Tibial artery (tissue), 4 donors: ENCODE measurements at regions of chr2 and their contacts with region 1.

Region 1: DNA sequence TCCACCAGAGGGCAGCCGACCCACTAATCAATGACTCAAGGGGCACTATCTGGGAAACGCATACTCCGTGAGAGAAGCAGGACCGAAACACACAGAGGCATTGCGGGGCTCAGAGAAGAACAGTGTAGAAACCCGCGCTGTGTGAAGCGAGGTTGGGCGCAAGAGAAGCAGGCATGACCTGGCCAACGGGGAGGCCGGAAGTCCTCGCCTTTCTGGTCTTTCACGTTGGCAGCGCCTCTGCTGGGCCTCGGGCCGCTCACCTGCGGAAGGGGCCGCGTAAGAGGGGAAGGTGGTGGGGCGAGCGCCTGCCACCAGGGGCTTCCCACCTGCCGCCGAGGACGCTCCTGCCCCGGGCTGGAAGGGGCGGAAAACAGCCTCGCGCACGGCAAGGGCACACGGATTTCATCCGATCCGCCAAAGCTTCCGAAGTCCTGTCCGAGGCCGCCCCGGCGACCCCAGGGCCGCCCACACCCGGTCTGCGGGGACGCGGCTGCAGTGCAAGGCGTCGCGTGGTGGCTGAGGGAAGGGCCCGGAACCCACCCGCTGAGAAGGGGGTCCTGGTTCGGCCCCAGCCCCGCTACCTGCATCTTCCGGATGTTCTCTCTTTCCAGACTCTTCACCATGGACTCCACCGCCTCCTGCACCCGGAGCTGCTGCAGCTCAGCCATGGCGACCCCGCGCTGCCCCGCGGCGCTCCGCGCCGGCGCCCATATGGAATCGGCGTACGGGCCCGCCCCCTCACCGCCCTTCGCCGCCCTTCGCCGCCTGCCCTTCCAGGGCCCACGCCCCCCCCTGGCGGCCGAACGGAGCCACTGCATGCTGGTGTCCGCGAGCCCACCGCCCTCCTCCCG is at the start of gene FAM136A:
- DNase-seq: peak; percentile 74 to 89
- H3K4me3 ChIP-seq: peak within 1 kb of the TSS; percentile 72 to 85
- H3K27ac ChIP-seq: peak within 1 kb of the TSS; percentile 80
- H3K4me1 ChIP-seq: peaks cover 0 to 10% (median 7%) of the 10 kb centered on the region in 4 donors
- H3K27me3 ChIP-seq: no peaks in the 10 kb centered on the region
- CTCF ChIP-seq: peak; percentile 93 to 98

Region 2: DNA sequence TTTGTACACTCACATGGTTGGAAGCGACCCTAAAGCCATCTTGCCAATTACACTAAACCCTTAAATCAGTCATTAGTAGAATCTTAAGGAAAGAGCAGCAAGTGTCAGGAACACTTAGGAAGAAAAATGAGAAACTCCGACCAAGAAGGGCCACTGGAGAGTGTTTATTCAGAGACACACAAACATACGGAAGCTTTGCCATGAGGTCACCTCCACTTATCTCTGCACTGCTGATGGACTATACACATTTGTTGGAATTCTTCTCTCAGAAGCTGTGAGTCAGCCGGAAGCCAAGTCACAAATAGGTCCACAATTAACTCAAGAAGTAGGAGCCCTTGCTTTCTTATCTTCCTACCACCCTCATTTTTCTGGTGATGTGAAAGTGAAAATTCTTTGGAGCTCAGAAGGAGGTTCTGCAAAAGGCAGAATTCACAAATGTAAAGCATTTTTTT is 1452.0 kb before region 1 on chr2:
- intact Hi-C with region 1: no loop called
- DNase-seq: no peak
- H3K4me3 ChIP-seq: no peak overlapping the region
- H3K27ac ChIP-seq: no peak overlapping the region
- H3K4me1 ChIP-seq: no peaks in the 10 kb centered on the region
- H3K27me3 ChIP-seq: peaks cover 0 to 3% of the 10 kb centered on the region in 2 donors
- CTCF ChIP-seq: no peak

Region 3: GRCh38 chr2:70190418-70191243 is 110.9 kb before region 1 on chr2 and contains the start of gene C2orf42:
- intact Hi-C with region 1: no loop called
- DNase-seq: peak; percentile 96 to 98
- H3K4me3 ChIP-seq: peak within 1 kb of the TSS; percentile 71 to 77
- H3K27ac ChIP-seq: peak within 1 kb of the TSS; percentile 95 to 96
- H3K4me1 ChIP-seq: peaks cover 0 to 14% (median 2%) of the 10 kb centered on the region in 4 donors
- H3K27me3 ChIP-seq: no peaks in the 10 kb centered on the region
- CTCF ChIP-seq: no peak

Region 4: DNA sequence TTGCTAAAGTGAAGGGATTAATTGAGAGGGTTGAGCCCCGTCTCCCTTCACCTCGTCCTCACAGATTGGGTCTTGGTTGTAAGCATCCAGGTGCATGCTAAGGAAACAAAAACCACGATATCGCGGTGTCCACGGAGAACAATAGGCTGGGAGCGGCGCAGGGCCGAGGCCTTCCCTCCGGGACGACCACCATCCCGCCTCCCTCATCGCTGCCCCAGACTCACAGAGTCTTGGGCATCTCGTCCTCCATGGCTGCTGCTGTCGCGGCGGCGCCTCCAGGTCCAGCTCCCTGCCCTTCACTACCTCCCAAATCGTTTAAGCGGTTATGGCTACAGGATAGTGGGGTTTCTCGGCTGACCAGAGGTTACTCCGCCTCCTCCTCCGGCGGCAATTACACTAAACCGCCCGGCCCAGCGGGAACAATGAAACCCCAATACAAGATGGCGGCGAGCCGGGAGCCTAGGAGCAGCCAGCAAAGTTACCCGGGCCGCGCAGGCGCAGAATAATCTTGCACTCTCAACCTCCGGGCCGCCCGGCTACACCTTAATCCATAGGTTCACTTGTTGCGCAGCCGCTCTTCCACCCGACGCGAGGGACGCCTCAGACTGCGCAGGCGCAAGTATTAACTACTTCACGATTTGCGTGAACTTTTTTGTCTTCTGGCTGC is 53.3 kb before region 1 on chr2 and contains the start of gene TIA1:
- intact Hi-C with region 1: loop called (anchors 10 kb)
- DNase-seq: peak; percentile 98 to 99
- H3K4me3 ChIP-seq: peak within 1 kb of the TSS; percentile 73 to 88
- H3K27ac ChIP-seq: peak within 1 kb of the TSS; percentile 90 to 95
- H3K4me1 ChIP-seq: peaks cover 0 to 37% (median 26%) of the 10 kb centered on the region in 4 donors
- H3K27me3 ChIP-seq: no peaks in the 10 kb centered on the region
- CTCF ChIP-seq: no peak

Region 5: DNA sequence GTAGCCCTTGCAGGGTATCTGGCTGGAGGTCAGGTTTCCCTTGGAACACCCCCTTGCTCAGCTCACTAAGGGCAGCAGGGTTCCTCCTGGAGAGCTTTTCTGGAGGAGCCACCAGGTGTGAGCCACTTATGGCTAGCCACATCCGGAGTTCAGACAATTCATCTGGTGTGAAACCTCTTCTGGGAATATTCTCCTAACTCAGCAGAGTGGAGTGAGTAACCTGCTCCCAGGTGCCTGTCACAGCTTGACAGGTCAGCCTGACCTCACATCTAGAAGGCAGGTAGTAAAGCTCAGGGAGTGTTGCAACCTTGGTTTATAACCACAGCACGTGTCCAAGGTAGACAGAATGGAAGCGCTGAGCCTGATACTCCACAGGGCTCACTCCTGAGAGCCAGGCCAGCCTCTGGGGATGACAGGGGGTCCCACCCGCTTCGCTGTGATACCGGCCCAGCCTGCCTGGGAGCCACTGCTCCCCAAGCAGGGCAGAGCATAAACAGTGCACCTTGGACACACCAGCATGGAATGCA is 314.7 kb after region 1 on chr2:
- intact Hi-C with region 1: loop called (anchors 5 kb)
- DNase-seq: no peak
- H3K4me3 ChIP-seq: no peak overlapping the region
- H3K27ac ChIP-seq: no peak overlapping the region
- H3K4me1 ChIP-seq: no peaks in the 10 kb centered on the region
- H3K27me3 ChIP-seq: peaks cover 0 to 17% of the 10 kb centered on the region in 2 donors
- CTCF ChIP-seq: no peak